ENCODE measurements at regions of chr1 and their contacts with region 1.

Region 1: GRCh38 chr1:86227026-86227425 is 70.5 kb upstream of the COL24A1 start:
- DNase-seq: no peak
- H3K4me3 ChIP-seq: no peak overlapping the region
- H3K27ac ChIP-seq: no peak overlapping the region
- H3K4me1 ChIP-seq: no peaks in the 10 kb centered on the region
- H3K27me3 ChIP-seq: no peaks in the 10 kb centered on the region
- CTCF ChIP-seq: no peak
- POLR2A ChIP-seq: no peak

Region 2: GRCh38 chr1:85033221-85033620 is 1193.8 kb before region 1 on chr1:
- intact Hi-C with region 1: no loop called
- DNase-seq: no peak
- H3K4me3 ChIP-seq: no peak overlapping the region
- H3K27ac ChIP-seq: no peak overlapping the region
- H3K4me1 ChIP-seq: no peaks in the 10 kb centered on the region
- H3K27me3 ChIP-seq: no peaks in the 10 kb centered on the region
- CTCF ChIP-seq: no peak
- POLR2A ChIP-seq: no peak

Region 3: DNA sequence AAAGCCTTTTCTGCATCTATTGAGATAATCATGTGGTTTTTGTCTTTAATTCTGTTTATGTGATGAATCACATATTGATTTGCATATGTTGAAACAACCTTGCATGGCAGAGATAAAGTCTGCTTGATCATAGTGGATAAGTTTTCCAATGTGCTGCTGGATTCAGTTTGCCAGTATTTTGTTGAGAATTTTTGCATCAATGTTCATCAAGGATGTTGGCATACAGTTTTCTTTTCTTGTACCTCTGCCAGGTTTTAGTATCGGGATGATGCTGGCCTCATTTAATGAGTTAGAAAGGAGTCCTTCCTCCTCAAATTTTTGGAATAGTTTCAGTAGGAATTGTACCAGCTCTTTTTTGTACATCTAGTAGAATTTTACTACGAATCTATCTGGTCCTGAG is 125.4 kb before region 1 on chr1:
- intact Hi-C with region 1: no loop called
- DNase-seq: no peak
- H3K4me3 ChIP-seq: no peak overlapping the region
- H3K27ac ChIP-seq: no peak overlapping the region
- H3K4me1 ChIP-seq: no peaks in the 10 kb centered on the region
- H3K27me3 ChIP-seq: no peaks in the 10 kb centered on the region
- CTCF ChIP-seq: no peak
- POLR2A ChIP-seq: no peak

Region 4: GRCh38 chr1:86296305-86297205 is 69.5 kb after region 1 on chr1:
- intact Hi-C with region 1: loop called (anchors 10 kb)
- DNase-seq: no peak
- H3K4me3 ChIP-seq: no peak overlapping the region
- H3K27ac ChIP-seq: no peak overlapping the region
- H3K4me1 ChIP-seq: no peaks in the 10 kb centered on the region
- H3K27me3 ChIP-seq: no peaks in the 10 kb centered on the region
- CTCF ChIP-seq: no peak
- POLR2A ChIP-seq: no peak

Measured in vagina (tissue), 2 donors.